ENCODE measurements at regions of chr17 and their contacts with region 1.

Region 1: GRCh38 chr17:19362277-19363113 is at the start of gene B9D1:
- DNase-seq: peak; percentile 99
- CTCF ChIP-seq: peak; percentile 99

Region 2: DNA sequence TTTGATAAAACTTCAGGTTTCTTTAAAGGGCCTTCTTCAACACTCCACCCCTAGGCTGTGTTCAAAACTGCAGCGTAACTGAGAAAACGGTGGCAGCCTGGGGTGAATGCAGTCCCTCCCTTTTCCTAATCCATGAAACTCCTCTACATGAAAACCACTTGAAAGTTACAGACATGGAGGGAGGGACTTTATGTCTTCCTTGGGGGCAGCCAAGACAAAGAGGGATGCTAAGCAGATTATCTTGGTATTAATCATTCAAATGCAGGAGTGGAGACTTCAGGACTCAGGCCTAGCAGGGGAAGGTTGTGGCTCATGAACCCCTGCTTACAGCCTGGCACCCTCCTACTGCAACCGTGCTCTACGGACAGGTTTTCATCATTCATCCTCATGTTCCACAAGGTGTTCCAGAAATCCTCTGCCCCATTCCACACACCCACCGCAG is 95.4 kb after region 1 on chr17:
- in situ Hi-C with region 1: loop called (anchors 10 kb)
- DNase-seq: no peak
- CTCF ChIP-seq: no peak

Region 3: GRCh38 chr17:19648475-19649406 is 286.2 kb after region 1 on chr17 and contains the start of gene ALDH3A2:
- in situ Hi-C with region 1: no loop called
- DNase-seq: peak; percentile 99
- CTCF ChIP-seq: no peak

Region 4: GRCh38 chr17:19664136-19664820 is 301.8 kb after region 1 on chr17:
- in situ Hi-C with region 1: no loop called
- DNase-seq: no peak
- CTCF ChIP-seq: no peak